ENCODE measurements at regions of chr15 and their contacts with region 1.

Region 1: DNA sequence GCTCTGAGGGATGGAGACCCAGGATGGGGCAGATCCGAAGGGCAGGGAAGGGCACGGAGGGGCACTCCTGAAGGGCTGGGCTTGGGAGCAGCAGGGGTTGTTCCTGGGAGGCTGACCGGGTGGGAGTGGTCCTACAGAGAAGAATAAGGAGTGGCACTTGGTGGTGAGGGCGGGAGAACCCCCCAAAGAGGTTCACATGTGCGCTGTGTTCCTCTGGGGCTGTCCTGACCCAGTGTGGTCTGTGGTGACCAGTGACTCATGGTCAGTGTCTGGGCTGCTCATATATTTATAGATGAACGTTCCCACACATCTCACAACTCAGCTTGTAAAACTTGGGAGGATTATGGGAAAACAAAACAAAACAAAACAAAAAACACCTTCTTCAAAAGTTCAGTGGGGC is 10.0 kb downstream of the TRPM1 start:
- DNase-seq: no peak
- ATAC-seq: no peak
- H3K4me3 ChIP-seq: no peak overlapping the region
- H3K27ac ChIP-seq: no peak overlapping the region
- H3K4me1 ChIP-seq: peaks cover 62% of the 10 kb centered on the region
- H3K27me3 ChIP-seq: peaks cover 0 to 2% of the 10 kb centered on the region in 2 experiments; a peak in 1 of 5 replicates
- CTCF ChIP-seq: no peak
- EP300 ChIP-seq: no peak
- POLR2A ChIP-seq: no peak
- RAD21 ChIP-seq: no peak

Region 2: DNA sequence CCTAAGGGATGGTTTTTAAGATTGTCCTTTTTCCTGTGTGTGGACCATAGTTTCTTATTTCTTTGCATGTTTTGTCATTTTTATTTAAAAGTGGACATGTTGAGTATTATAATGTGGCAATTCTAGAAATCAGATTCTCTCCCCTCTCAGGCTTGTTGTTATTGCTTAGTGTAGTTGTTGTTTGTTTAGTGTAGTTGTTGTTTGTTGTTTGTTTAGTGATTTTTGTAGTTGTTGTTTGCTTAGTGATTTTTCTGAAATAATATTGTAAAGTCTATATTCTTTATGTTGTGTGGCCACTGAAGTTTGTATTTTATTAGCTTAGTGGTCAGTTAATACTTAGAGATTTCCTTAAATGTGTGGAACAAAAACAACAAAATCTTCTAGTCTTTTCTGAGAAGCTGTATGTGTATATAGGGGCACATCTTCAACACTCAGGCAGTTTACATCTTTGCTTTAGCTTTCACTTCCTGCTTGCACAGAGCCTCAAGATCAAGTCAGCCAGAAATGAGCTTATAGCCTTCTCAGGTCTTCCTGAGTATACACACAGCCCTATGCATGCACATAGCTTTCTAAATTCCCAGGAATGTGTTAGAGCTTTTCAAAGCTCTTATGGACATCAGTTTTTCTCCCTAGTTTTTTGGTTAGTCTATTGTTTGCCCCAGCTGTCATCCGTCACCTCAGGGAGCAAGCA is 77.8 kb before region 1 on chr15:
- CTCF ChIA-PET with region 1: no interaction called
- POLR2A ChIA-PET with region 1: no interaction called
- in situ Hi-C with region 1: no loop called
- intact Hi-C with region 1: loop called (anchors 5 kb)
- DNase-seq: no peak
- ATAC-seq: peak; percentile 77
- H3K4me3 ChIP-seq: no peak overlapping the region; a peak in 1 of 6 replicates
- H3K27ac ChIP-seq: no peak overlapping the region
- H3K4me1 ChIP-seq: peaks cover 17% of the 10 kb centered on the region
- H3K27me3 ChIP-seq: no peaks in the 10 kb centered on the region
- CTCF ChIP-seq: no peak
- EP300 ChIP-seq: no peak
- POLR2A ChIP-seq: no peak
- RAD21 ChIP-seq: no peak

Measured in HepG2 (cell line).